Dorsolateral prefrontal cortex (tissue), 120 donors: ENCODE measurements at regions of chr1 and their contacts with region 1.

Region 1: DNA sequence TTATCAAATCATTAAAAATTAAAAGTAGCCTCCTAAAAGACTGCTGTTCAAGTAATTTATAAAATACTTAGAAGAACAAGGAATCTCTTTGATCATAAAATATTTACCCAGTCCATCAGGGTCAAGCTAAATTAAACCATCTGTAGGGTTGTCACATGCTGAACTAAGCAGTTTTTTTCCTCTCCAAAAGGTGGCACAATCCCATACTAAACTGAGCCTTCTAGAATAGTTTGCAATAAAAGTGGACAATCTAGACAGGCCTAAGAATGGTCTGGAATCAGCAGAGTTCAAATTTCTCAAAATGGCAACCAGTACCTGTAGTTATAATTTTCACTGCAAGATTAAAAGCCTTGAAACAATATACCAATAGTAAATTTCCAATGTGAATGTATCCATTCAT is 194.8 kb downstream of the EIF4G3 start:
- DNase-seq: no peak
- H3K4me3 ChIP-seq: no peak overlapping the region
- H3K27ac ChIP-seq: peak overlapping the region in 11 of 59 donors; percentile 5 to 68 (median 33)
- H3K27me3 ChIP-seq: no peaks in the 10 kb centered on the region
- CTCF ChIP-seq: peak in 50 of 56 donors; percentile 20 to 69 (median 44)

Region 2: DNA sequence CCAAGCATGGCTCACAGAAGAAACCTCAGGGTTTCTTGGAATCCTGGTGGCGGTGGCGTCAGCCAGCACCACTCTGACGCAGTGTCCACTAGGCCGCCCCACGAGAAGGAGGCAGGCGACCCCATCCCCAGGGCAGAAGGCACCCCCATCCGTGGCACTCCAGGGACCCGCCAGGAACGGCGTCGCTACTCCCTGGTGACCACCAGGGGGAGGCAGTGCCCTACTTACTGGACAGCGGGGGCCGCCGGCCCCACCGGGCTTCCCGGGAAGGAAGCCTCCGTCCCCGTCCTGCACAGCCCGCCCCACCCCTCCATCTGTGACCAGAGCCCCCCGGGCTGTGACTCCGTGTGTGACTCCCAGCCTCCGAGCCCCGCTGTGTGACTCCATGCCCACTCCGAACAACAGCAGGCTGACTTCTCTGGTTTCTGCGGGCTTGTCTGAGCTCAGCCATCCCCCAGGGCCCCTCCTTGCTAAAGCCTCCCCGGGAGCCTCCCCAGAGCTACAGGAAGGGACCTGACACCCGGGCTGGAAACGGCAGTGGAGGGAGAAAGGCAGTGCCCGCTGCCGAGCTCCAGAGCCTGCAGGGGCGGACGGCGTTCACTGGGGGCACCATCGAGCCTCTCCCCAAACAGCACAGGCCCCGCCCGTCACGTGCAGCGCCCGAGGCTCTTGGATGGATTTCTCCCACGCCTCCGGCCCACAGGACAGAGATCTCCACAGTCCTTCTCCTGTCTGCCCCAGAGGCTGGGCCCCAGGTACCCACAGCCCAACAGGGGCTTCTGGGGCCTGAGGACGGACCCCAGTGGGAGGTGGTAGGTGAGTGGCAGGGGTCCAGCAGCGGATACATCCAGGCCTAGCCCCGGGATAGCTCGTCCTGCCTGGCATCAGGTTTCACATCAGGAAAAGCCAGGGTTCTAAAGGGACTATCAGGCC is 285.3 kb before region 1 on chr1:
- intact Hi-C with region 1: loop called in 1 of 2 experiments (anchors 10 kb)
- DNase-seq: peak; percentile 63 to 89 (median 84)
- H3K4me3 ChIP-seq: peak overlapping the region; percentile 48 to 79 (median 63)
- H3K27ac ChIP-seq: peak overlapping the region in 58 of 59 donors; percentile 15 to 95 (median 86)
- H3K27me3 ChIP-seq: no peaks in the 10 kb centered on the region
- CTCF ChIP-seq: peak; percentile 76 to 98 (median 93)

Region 3: GRCh38 chr1:20786253-20787028 is 195.5 kb before region 1 on chr1:
- intact Hi-C with region 1: loop called in 1 of 2 experiments (anchors 5 kb)
- DNase-seq: peak; percentile 79 to 96 (median 90)
- H3K4me3 ChIP-seq: peak overlapping the region; percentile 61 to 100 (median 92)
- H3K27ac ChIP-seq: peak overlapping the region; percentile 87 to 100 (median 98)
- H3K27me3 ChIP-seq: no peaks in the 10 kb centered on the region
- CTCF ChIP-seq: peak in 27 of 56 donors; percentile 2 to 49 (median 18)

Region 4: GRCh38 chr1:21117597-21118001 is 135.7 kb after region 1 on chr1:
- intact Hi-C with region 1: loop called in 1 of 2 experiments (anchors 10 kb)
- DNase-seq: no peak
- H3K4me3 ChIP-seq: peak overlapping the region in 24 of 59 donors; percentile 3 to 44 (median 23)
- H3K27ac ChIP-seq: peak overlapping the region; percentile 52 to 99 (median 92)
- H3K27me3 ChIP-seq: no peaks in the 10 kb centered on the region
- CTCF ChIP-seq: peak in 2 of 56 donors; percentile 8 to 10

Region 5: DNA sequence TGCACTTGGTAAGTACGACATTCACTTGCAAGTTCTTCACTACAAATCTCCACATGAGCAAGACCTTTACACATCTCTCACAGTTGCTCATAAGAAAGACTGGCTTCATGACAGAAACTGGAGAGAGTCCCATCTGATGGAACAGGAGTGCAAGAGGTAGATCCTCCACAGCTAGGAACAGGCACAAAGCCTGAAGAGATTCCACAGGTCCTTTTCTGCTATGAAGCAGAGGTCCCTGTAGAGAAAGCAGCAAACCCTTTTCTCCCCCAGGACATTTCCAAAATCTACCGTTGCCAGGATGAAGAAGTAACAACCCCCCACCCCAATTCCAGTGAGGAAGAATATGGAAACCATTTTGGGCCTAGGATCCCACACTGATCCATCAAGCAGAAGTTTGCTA is 147.5 kb after region 1 on chr1:
- intact Hi-C with region 1: no loop called
- DNase-seq: no peak
- H3K4me3 ChIP-seq: no peak overlapping the region
- H3K27ac ChIP-seq: peak overlapping the region in 2 of 59 donors; percentile 19 to 25
- H3K27me3 ChIP-seq: no peaks in the 10 kb centered on the region
- CTCF ChIP-seq: no peak

Region 6: GRCh38 chr1:21176586-21177555 is 195.0 kb after region 1 on chr1 and contains the start of gene EIF4G3:
- intact Hi-C with region 1: loop called in 1 of 2 experiments (anchors 5 kb)
- DNase-seq: peak; percentile 96 to 99 (median 98)
- H3K4me3 ChIP-seq: peak within 1 kb of the TSS; percentile 60 to 95 (median 84)
- H3K27ac ChIP-seq: peak within 1 kb of the TSS; percentile 79 to 98 (median 94)
- H3K27me3 ChIP-seq: no peaks in the 10 kb centered on the region
- CTCF ChIP-seq: peak in 30 of 56 donors; percentile 3 to 52 (median 24)
- total RNA-seq, gene EIF4G3: 102 to 177 (median 137) TPM

Region 7: GRCh38 chr1:21189906-21190500 is 208.1 kb after region 1 on chr1:
- intact Hi-C with region 1: loop called (anchors 5 to 10 kb)
- DNase-seq: no peak
- H3K4me3 ChIP-seq: no peak overlapping the region
- H3K27ac ChIP-seq: no peak overlapping the region
- H3K27me3 ChIP-seq: no peaks in the 10 kb centered on the region
- CTCF ChIP-seq: no peak

Region 8: GRCh38 chr1:21200767-21201166 is 218.9 kb after region 1 on chr1:
- intact Hi-C with region 1: loop called (anchors 5 to 10 kb)
- DNase-seq: no peak
- H3K4me3 ChIP-seq: no peak overlapping the region
- H3K27ac ChIP-seq: no peak overlapping the region
- H3K27me3 ChIP-seq: no peaks in the 10 kb centered on the region
- CTCF ChIP-seq: no peak